IMR-90 (cell line): ENCODE measurements at regions of chr12 and their contacts with region 1.

Region 1: GRCh38 chr12:109573029-109573913 is at the starts of genes MMAB and MVK:
- DNase-seq: peak; percentile 99
- ATAC-seq: peak; percentile 98
- H3K4me3 ChIP-seq: peak within 1 kb of the TSS; percentile 73
- H3K27ac ChIP-seq: peak within 1 kb of the TSS; percentile 44
- H3K4me1 ChIP-seq: peaks cover 2% of the 10 kb centered on the region; the same call in 1 of the 2 replicates
- H3K27me3 ChIP-seq: no peaks in the 10 kb centered on the region
- CTCF ChIP-seq: no peak
- POLR2A ChIP-seq: peak; percentile 49; the same call in 1 of the 2 replicates
- RAD21 ChIP-seq: no peak
- total RNA-seq, gene MMAB: 14.2 and 16.5 TPM in 2 replicates
- total RNA-seq, gene MVK: 6.6 and 6.9 TPM in 2 replicates

Region 2: DNA sequence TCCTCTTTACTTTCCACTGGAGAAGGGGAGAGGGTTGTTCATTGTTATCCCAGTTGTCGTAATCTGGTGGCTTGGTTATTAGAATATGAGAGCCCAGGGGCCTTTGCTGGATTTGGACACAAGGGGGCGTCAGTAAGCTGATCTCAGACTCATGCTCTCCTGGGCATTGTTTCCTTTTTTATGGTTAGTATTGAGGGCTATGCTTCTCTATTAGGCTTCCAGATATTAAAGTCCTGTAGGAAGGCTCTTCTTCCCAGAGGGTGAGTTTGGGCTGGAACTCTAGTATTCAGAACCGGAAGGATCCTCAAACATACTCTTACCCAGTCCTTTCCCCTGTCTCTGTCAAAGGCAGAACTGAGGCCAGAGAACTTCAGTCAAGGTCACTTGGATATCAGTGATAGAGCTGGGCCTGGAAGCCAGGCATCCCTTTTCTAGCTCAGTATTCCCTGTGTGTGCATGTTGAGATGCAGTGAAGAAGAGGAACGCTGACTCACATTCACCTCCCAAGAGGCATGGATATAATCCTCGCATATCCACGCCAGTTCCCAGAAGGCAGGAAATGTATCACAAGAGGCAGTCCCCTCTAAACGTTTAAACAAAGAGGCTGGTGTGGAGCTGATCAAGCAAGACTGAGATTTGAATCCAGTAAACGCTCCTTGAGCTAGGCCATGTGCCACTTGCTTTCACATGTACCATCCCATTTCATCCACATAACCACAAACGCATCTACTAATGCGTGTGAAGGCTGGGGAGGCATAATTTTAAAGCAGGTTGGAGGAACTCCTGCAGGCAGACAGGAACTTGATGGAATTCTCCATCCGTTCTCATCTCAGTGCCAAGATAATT is 54.2 kb before region 1 on chr12:
- CTCF ChIA-PET with region 1: interaction called, 5 read pairs
- POLR2A ChIA-PET with region 1: no interaction called
- dilution Hi-C with region 1: no loop called
- in situ Hi-C with region 1: no loop called
- intact Hi-C with region 1: loop called (anchors 1 kb)
- DNase-seq: peak; percentile 92
- ATAC-seq: peak; percentile 91
- H3K4me3 ChIP-seq: no peak overlapping the region
- H3K27ac ChIP-seq: peak overlapping the region; percentile 67
- H3K4me1 ChIP-seq: peaks cover 7% of the 10 kb centered on the region
- H3K27me3 ChIP-seq: no peaks in the 10 kb centered on the region
- CTCF ChIP-seq: peak; percentile 84
- POLR2A ChIP-seq: no peak
- RAD21 ChIP-seq: peak; percentile 82

Region 3: GRCh38 chr12:110199339-110200123 is 626.3 kb after region 1 on chr12:
- CTCF ChIA-PET with region 1: no interaction called
- POLR2A ChIA-PET with region 1: no interaction called
- dilution Hi-C with region 1: no loop called
- in situ Hi-C with region 1: no loop called
- intact Hi-C with region 1: no loop called
- DNase-seq: peak; percentile 78
- ATAC-seq: peak; percentile 88
- H3K4me3 ChIP-seq: no peak overlapping the region
- H3K27ac ChIP-seq: no peak overlapping the region
- H3K4me1 ChIP-seq: peaks cover 7% of the 10 kb centered on the region
- H3K27me3 ChIP-seq: no peaks in the 10 kb centered on the region
- CTCF ChIP-seq: no peak
- POLR2A ChIP-seq: no peak
- RAD21 ChIP-seq: no peak